PC-9 (cell line): ENCODE measurements at regions of chr5 and their contacts with region 1.

Region 1: DNA sequence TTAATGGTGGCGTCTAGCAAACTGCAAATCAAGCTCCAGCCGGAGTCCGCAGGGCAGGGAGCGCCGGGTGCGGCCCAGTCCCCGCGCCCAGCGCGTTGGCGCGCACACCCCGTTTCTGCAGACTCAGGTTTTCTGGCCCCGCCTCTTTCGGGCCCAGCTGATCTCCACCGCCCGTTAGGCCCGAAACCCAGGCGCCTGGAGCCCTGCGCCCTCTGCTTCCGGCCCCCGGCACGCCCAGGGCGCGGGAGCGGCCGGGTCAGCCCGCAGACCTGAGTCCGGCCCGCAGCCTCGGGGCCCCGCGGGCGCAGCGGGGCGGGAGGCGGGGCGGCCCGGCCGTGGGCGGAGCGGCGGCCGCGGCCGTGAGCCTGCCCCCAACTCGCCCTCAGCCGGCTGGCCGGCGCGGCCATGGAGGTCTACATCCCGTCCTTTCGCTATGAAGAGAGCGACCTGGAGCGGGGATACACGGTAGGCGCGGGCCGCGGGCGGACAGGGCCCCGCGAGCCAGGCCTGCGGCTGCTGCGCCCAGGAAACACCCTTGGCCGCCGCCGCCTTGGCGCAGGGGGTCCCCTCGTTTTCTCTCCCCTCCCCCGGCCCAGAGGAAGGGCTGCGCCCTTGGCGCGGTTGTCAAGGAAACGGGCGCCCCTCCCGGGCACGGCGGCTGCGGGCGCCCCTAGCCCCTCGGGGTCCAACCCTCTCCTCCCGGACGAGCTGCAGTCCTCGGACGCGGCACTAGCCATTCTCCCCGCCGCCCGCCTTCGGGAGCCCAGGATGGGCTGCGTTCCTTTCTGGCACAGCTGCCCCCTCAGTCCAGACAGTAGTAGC is at the start of gene SNX24:
- DNase-seq: peak; percentile 70 to 76
- H3K4me3 ChIP-seq: peak within 1 kb of the TSS; percentile 64
- H3K27ac ChIP-seq: peak within 1 kb of the TSS; percentile 87
- H3K4me1 ChIP-seq: peaks cover 55% of the 10 kb centered on the region
- H3K27me3 ChIP-seq: no peaks in the 10 kb centered on the region
- CTCF ChIP-seq: no peak
- total RNA-seq, gene SNX24: 21.5 and 22.3 TPM in 2 replicates

Region 2: GRCh38 chr5:122704243-122705036 is 141.0 kb before region 1 on chr5:
- CTCF ChIA-PET with region 1: no interaction called
- POLR2A ChIA-PET with region 1: no interaction called
- intact Hi-C with region 1: loop called (anchors 5 kb)
- DNase-seq: no peak
- H3K4me3 ChIP-seq: no peak overlapping the region
- H3K27ac ChIP-seq: no peak overlapping the region
- H3K4me1 ChIP-seq: no peaks in the 10 kb centered on the region
- H3K27me3 ChIP-seq: no peaks in the 10 kb centered on the region
- CTCF ChIP-seq: peak; percentile 73

Region 3: DNA sequence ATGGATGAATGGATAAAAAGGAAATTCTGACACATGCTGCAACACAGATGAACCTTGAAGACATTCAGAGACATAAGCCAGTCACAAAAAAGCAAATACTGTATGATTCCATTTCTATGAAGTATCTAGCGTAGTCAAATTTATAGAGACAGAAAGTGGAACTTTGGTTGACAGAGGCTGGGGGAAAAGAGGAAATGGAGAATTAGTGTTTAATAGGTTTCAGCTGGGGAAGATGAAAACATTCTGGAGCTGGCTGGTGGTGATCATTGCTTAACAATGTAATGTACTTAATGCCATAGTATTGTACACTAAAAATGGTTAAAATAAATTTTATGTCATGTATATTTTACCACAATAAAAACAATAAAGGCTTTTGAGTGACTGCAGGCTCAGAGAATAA is 166.9 kb after region 1 on chr5:
- CTCF ChIA-PET with region 1: no interaction called
- POLR2A ChIA-PET with region 1: no interaction called
- intact Hi-C with region 1: no loop called
- DNase-seq: no peak
- H3K4me3 ChIP-seq: no peak overlapping the region
- H3K27ac ChIP-seq: no peak overlapping the region
- H3K4me1 ChIP-seq: no peaks in the 10 kb centered on the region
- H3K27me3 ChIP-seq: no peaks in the 10 kb centered on the region
- CTCF ChIP-seq: no peak

Region 4: DNA sequence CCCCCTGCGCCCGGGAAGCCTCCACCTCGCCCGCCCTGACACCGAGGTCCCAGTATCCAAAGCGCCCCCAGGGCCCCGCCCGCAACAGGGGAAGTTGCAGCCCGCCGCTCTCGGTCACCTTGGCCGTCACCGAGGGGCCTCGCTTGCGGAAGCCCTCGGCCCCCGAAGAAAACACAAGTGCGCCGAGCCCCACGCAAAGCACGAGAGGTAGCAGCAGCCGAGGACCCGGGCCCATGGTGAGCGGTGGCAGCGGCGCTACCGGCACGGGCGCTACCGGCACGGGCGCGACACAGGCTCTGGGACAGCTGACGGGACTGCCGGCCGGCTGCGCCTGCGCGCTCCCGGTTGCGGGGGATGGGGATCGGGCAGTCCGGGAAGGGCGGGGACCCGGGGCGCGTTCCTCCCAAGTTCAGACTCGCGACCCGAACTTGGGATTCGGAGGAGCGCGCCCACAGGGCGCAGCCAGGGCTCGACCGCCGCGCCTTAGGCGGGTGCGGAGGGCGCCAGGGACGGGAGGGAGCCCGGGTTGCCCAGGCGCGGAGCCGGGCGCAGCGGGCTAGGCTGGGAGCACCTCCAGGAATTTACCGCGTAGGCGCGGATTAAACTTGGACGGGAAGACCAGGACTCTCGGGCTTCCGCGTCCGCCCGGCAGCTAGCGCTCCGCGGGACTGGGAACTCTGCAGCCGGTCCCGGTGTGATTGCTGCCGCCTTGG is 191.1 kb after region 1 on chr5 and contains the start of gene PPIC:
- CTCF ChIA-PET with region 1: no interaction called
- POLR2A ChIA-PET with region 1: interaction called, 5 read pairs
- intact Hi-C with region 1: loop called (anchors 5 kb)
- DNase-seq: peak; percentile 54 to 90
- H3K4me3 ChIP-seq: peak within 1 kb of the TSS; percentile 98
- H3K27ac ChIP-seq: peak within 1 kb of the TSS; percentile 36
- H3K4me1 ChIP-seq: peaks cover 5% of the 10 kb centered on the region
- H3K27me3 ChIP-seq: no peaks in the 10 kb centered on the region
- CTCF ChIP-seq: no peak
- total RNA-seq, gene PPIC: 22.3 and 27.4 TPM in 2 replicates

Region 5: DNA sequence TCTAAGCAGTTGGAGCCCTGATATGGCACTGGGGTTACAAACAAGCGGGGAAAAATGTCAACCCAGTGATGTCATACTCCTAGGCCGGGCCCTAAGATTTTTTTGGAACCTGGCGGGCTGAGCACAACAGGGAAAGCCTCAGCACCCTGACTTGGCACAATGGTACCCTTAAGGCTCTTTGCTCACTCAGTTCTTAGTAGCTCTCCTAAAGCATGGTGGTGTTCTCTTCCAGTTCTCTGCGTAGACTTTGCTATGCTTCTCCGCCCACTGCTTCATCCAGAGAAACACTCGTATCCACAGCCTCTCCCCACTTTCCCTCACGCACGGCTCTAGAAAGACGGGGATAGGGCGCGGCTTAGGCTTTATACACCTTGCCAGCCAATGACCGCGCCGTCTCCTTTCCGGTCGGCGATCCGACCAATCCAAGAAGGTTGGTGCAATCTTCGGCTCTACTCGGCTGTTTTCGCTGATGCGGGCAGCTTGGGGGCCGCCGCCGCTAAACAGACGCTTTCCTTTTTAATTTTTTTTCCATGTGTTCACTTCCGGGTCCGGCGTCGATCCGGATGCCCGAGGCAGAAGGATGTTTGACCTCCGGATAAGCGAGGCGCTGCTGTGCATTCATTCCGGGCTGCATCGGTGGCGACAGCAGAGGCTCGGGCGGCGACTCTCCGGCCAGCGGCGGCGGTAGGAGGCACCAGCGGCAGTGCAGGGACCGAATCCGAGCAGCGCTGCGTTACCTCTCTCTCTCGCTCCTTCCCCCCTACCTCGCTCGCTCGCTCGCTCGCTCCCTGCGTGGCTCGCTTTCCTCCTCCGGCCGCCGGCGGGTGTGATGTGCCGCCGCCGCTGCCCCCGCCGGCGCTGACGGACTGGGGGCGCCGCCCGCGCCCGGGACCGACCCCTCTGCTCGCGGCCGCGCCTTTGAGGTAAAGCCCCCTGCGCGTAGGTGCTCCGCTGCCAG is 666.5 kb after region 1 on chr5 and contains the start of gene CSNK1G3:
- CTCF ChIA-PET with region 1: no interaction called
- POLR2A ChIA-PET with region 1: interaction called, 3 read pairs
- intact Hi-C with region 1: loop called (anchors 10 kb)
- DNase-seq: peak; percentile 93 to 95
- H3K4me3 ChIP-seq: peak within 1 kb of the TSS; percentile 93
- H3K27ac ChIP-seq: peak within 1 kb of the TSS; percentile 84
- H3K4me1 ChIP-seq: peaks cover 30% of the 10 kb centered on the region
- H3K27me3 ChIP-seq: no peaks in the 10 kb centered on the region
- CTCF ChIP-seq: no peak
- total RNA-seq, gene CSNK1G3: 31.3 and 39.0 TPM in 2 replicates